ENCODE measurements at regions of chr17 and their contacts with region 1.

Region 1: DNA sequence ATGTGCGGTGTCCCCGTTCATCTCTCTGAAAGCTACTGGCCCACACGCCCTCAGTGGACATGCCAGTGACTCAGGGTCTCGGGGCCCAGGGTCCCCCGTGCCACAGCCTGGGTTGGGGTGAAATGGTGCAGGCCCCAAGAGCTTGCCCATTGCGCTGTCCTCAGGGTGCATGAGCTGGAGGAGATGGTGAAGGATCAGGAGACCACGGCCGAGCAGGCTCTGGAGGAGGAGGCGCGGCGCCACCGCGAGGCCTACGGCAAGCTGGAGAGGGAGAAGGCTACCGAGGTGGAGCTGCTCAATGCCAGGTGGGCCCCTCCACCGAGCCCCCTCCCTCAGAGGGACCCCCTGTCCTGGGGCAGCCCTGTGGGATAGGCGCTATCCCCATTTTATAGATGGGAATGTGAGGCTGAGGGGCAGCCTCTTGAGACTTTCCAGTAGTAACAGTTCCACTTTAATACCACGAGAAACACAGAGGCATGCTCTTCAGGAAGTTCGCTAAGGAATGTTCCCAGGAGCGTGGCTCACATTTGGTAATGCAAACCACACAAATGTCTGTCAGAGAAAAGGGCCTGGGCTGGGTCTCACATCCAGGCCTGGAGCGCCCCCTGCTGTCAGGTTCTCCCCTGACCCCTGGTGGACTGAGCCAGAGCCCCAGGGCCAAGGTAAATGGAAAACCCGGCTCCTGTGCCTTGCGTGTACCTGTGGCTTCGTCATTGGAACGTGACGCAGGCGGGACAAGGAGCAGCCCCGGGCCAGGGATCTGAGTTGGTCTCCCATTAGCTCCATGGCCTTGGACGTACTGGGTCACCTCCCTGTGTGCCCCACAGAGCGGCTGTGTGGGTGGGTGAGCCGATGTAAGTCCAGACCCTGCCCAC is 133.7 kb downstream of the RAB11FIP4 start:
- DNase-seq: peak; percentile 83 to 95 (median 92)
- H3K4me3 ChIP-seq: no peak overlapping the region
- H3K27ac ChIP-seq: no peak overlapping the region
- H3K4me1 ChIP-seq: no peaks in the 10 kb centered on the region
- H3K27me3 ChIP-seq: no peaks in the 10 kb centered on the region
- CTCF ChIP-seq: peak; percentile 87 to 95 (median 91)
- POLR2A ChIP-seq: no peak

Region 2: DNA sequence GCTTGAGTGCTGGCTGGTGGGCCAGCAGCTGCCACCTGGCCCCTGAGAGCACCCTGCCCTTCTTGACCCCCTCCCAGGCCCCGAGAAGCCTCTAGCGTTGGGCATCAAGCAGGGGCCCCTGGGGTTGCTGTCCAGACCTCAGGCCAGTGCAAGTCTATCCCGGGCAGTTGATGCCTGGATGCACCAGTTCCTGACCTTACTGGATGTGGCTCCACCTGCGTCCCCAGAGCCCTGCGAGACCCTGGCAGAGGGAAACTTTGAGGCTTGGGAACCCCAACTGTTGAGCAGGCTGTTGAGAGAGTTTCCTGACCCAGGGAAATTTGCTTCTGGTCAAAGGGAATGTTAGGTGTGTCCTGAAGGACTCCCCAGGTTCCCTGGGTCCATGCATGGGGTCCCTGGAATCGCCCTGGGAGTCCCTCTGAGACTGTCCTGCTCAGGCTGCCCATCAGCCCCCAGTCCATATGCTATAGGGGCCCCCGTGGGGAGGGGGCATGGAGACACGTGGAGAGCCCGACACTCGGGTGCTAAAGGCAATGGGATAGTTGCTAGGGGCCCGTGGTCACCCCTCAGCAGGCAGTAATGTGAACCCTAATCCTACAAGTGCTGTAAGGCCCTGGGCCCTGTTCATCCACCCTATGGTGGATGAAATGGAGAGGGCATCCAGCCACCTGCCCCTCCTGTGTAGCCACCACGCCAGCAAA is 87.3 kb before region 1 on chr17:
- intact Hi-C with region 1: loop called (anchors 5 kb)
- DNase-seq: no peak
- H3K4me3 ChIP-seq: no peak overlapping the region
- H3K27ac ChIP-seq: no peak overlapping the region
- H3K4me1 ChIP-seq: no peaks in the 10 kb centered on the region
- H3K27me3 ChIP-seq: no peaks in the 10 kb centered on the region
- CTCF ChIP-seq: no peak
- POLR2A ChIP-seq: no peak

Region 3: GRCh38 chr17:31869797-31870568 is 344.8 kb after region 1 on chr17:
- intact Hi-C with region 1: no loop called
- DNase-seq: no peak
- H3K4me3 ChIP-seq: no peak overlapping the region
- H3K27ac ChIP-seq: no peak overlapping the region
- H3K4me1 ChIP-seq: no peaks in the 10 kb centered on the region
- H3K27me3 ChIP-seq: no peaks in the 10 kb centered on the region
- CTCF ChIP-seq: no peak
- POLR2A ChIP-seq: no peak